ENCODE measurements at regions of chr9 and their contacts with region 1.

Region 1: DNA sequence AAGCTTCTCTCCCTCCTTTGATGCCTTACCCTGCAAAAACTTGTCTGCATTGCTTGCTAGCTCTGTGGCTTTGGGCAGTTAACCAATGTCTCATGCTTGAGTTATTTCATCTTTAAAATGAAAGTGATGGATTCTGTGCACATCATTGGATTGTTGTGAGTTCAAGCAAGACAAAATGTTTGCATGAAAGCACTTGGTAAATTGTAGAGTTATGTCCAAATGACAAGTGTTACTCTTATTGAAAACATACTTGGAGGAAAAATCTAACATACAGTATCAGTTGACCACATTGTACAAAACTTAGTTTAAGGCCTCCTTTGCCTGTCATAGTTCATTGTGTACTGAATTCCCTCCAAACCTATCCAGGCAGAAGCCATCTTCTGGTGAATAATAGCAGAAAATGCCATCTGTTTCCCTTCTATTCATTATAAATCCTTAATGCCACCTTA is 30.0 kb downstream of the TGFBR1 start:
- DNase-seq: peak in 7 of 10 donors; percentile 13 to 65 (median 50)
- ATAC-seq: peak; percentile 64 to 76
- H3K4me3 Mint-ChIP-seq: peak overlapping the region; percentile 44 to 84 (median 71)
- H3K27ac Mint-ChIP-seq: peak overlapping the region; percentile 21 to 97 (median 92)
- H3K4me1 Mint-ChIP-seq: peaks cover 31 to 92% (median 86%) of the 10 kb centered on the region in 4 donors
- H3K27me3 Mint-ChIP-seq: no peaks in the 10 kb centered on the region

Region 2: GRCh38 chr9:98989036-98990000 is 145.6 kb before region 1 on chr9:
- POLR2A ChIA-PET with region 1: no interaction called
- DNase-seq: no peak
- ATAC-seq: no peak
- H3K4me3 Mint-ChIP-seq: no peak overlapping the region
- H3K27ac Mint-ChIP-seq: peak overlapping the region in 1 of 10 donors; percentile 24
- H3K4me1 Mint-ChIP-seq: peaks cover 0 to 8% (median 0%) of the 10 kb centered on the region in 4 donors
- H3K27me3 Mint-ChIP-seq: peaks cover 0 to 3% (median 0%) of the 10 kb centered on the region in 5 donors

Region 3: GRCh38 chr9:99083051-99083450 is 51.9 kb before region 1 on chr9:
- POLR2A ChIA-PET with region 1: no interaction called
- DNase-seq: no peak
- ATAC-seq: no peak
- H3K4me3 Mint-ChIP-seq: no peak overlapping the region
- H3K27ac Mint-ChIP-seq: no peak overlapping the region
- H3K4me1 Mint-ChIP-seq: peaks cover 17 to 33% (median 23%) of the 10 kb centered on the region in 4 donors
- H3K27me3 Mint-ChIP-seq: no peaks in the 10 kb centered on the region

Region 4: DNA sequence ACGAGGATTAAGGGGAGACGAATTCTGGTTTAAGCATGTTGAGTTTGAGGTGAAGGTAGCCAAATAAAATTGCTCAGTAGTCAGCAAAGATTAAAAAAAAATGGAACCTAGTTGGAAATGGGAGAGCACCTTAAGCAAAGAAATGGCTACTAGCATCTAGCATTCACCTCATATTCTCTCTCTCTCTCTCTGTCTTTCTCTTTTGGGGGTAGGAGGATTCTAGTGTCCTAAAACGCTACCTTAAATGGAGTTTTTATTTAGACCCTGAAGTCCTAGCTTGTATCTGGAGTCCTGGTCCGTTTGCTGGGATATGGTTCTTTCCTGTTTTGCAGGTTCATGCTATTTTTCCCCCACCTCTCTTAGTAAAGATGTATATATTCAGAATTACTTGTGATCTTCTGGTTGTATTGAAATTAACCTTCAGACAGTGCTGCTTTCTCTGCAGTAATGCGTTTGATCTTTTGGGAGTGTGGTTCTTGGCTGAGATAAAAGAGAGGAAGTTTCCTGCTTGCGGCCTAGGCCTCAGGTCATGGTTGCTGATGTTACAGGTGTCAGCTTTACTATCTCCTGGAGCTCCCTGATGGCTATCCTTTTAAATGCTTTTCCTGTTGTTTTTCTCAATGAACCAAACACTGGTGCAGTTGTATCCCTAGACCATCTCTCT is 22.0 kb before region 1 on chr9:
- POLR2A ChIA-PET with region 1: interaction called, 53 read pairs
- DNase-seq: peak in 9 of 10 donors; percentile 15 to 90 (median 74)
- ATAC-seq: peak; percentile 95 to 98
- H3K4me3 Mint-ChIP-seq: peak overlapping the region; percentile 61 to 82 (median 75)
- H3K27ac Mint-ChIP-seq: peak overlapping the region; percentile 56 to 92 (median 88)
- H3K4me1 Mint-ChIP-seq: peaks cover 54 to 94% (median 89%) of the 10 kb centered on the region in 4 donors
- H3K27me3 Mint-ChIP-seq: no peaks in the 10 kb centered on the region

Region 5: GRCh38 chr9:99118782-99119466 is 16.0 kb before region 1 on chr9:
- POLR2A ChIA-PET with region 1: interaction called, 15 read pairs
- DNase-seq: peak in 9 of 10 donors; percentile 28 to 81 (median 55)
- ATAC-seq: peak; percentile 98 to 99
- H3K4me3 Mint-ChIP-seq: peak overlapping the region; percentile 68 to 94 (median 85)
- H3K27ac Mint-ChIP-seq: peak overlapping the region; percentile 53 to 95 (median 92)
- H3K4me1 Mint-ChIP-seq: peaks cover 47 to 93% (median 86%) of the 10 kb centered on the region in 4 donors
- H3K27me3 Mint-ChIP-seq: no peaks in the 10 kb centered on the region

Measured in naive thymus-derived CD8-positive, alpha-beta T cell (primary cell).